ENCODE measurements at regions of chr2 and their contacts with region 1.

Region 1: GRCh38 chr2:49959961-49960553 is 805.7 kb upstream of the FSHR start:
- DNase-seq: no peak
- H3K4me3 ChIP-seq: no peak overlapping the region
- H3K27ac ChIP-seq: no peak overlapping the region
- H3K4me1 ChIP-seq: no peaks in the 10 kb centered on the region
- CTCF ChIP-seq: no peak

Region 2: DNA sequence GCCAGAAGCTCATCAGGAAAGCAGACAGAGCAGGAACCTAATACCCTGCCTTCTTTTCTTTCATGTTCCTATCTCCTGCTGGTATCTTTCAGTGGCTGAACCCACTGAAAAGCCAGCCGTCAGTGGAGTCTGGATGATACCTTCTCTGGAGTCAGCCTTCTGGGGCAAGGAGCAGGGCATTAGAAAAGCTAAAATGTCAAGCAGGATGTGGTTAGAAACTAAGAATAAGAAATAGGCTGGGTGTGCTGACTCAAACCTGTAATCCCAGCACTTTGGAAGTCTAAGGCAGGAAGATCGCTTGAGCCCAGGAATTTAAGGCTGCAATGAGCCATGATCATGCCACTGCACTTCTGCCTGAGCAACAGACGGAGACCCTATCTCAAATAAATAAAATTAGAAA is 163.8 kb before region 1 on chr2:
- CTCF ChIA-PET with region 1: no interaction called
- POLR2A ChIA-PET with region 1: interaction called, 11 read pairs
- intact Hi-C with region 1: no loop called
- DNase-seq: no peak
- H3K4me3 ChIP-seq: no peak overlapping the region
- H3K27ac ChIP-seq: no peak overlapping the region
- H3K4me1 ChIP-seq: no peaks in the 10 kb centered on the region
- CTCF ChIP-seq: no peak

Measured in OCI-LY7 (cell line).